Mucosa of descending colon (tissue), 3 donors: ENCODE measurements at regions of chr11 and their contacts with region 1.

Region 1: GRCh38 chr11:5684646-5685362 is at the start of gene TRIM5:
- DNase-seq: peak; percentile 81 to 90 (median 86)
- ATAC-seq: peak; percentile 96
- H3K4me3 ChIP-seq: peak within 1 kb of the TSS; percentile 17
- H3K4me1 ChIP-seq: peaks cover 11% of the 10 kb centered on the region
- CTCF ChIP-seq: no peak
- total RNA-seq, gene TRIM5: 19.6 to 24.6 (median 21.5) TPM

Region 2: DNA sequence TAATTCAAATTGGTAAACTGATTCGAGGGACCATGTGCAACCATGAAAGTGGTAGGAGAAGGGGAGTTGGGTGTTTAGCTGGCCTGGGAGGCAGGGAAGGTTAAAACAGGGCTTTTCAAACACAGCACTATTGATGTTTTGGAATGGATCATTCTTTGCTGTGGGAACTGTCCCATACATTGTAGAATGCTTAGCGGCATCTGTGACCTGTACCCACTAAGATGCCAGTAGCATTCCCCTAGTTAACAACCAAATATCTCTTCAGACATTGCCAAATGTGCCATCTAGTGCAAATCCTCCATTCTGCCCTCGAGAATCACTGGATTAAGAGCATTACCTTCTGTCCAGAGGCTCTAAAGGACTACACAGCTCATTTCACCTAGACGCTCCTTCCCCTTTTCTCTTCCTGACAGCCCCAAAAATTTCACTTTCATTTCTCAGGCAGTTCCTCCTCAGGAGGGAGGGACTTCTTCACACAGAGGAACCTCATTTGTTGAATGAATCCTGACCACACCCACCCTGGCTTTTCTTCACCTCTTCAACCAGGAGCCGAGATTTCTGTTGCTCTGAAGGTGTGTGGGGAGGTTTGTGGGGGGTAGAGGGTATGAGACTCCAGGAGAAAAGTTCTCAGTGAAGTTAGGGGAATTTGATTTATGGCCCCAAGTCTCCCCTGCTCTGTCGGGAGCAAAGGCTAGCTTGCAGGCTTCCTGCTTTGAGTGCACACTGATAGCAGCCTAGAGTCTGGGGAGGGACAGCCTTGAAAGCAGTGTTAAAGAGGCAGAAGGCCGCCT is 60.1 kb before region 1 on chr11 and contains the start of gene TRIM34:
- intact Hi-C with region 1: loop called in 1 of 2 experiments (anchors 10 kb)
- DNase-seq: peak in 2 of 3 donors; percentile 41 to 89
- ATAC-seq: peak; percentile 94
- H3K4me3 ChIP-seq: peak within 1 kb of the TSS; percentile 18
- H3K4me1 ChIP-seq: peaks cover 25% of the 10 kb centered on the region
- CTCF ChIP-seq: no peak
- total RNA-seq, gene TRIM34: 7.3 to 11.9 (median 8.5) TPM

Region 3: DNA sequence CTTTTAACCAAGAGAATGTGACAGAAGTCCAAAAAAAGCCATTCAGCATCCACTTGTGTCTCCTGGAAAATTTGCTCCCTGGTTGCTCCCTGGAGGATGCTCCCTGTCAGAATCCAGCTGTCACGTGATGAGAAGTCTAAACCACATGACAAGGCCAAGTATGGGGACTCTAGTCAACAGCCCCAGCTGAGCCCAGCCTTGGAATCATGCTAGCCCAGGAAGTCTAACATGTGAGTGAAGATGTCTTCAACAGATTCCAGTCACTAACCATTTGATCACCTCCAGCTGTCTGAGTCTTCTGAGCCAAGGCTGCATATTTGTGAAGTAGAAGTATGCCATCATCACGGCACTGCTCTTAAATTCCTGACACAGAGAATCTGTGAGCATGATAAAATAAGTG is 426.9 kb after region 1 on chr11:
- intact Hi-C with region 1: no loop called
- DNase-seq: no peak
- ATAC-seq: no peak
- H3K4me3 ChIP-seq: no peak overlapping the region
- H3K4me1 ChIP-seq: no peaks in the 10 kb centered on the region
- CTCF ChIP-seq: no peak